ENCODE measurements at regions of chr22 and their contacts with region 1.

Region 1: DNA sequence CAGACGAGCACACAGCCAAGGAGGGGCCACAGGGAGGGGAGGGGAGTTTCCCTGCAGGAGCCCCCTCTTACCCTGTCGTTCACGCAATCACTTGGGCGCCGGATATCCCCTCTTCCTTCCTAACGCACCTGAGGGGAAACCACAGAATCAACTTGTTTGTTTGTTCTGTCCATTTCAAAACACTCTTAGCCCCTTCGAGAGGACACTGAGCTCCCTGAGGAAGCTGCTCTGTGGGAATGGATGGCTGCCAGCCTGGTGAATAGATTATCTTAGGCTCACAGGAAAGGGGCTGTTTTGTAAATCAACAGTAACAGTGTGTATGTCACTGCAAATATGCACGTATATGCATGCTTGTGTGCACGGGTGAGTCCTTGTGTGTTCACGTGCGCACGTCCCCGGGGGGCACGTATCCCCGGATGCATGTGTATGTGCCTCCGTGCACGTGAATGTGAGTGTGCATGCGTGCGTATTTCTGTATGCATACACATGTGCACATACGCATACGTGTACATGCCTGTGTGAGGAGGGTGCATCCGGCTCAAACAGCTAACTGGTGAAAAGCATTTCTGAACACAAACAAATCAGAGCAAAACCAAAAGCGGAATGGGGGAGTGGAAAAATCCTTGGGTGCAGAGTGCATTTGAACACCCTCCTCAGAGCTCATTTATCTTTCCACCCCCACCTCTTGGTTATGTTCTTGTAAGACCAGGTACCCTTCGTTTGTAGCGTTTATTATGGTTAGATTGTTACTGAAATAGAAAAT is 7.2 kb downstream of the ARSA start:
- DNase-seq: peak; percentile 95
- ATAC-seq: peak; percentile 79
- H3K4me3 Mint-ChIP-seq: peak overlapping the region; percentile 84
- H3K27ac Mint-ChIP-seq: peak overlapping the region; percentile 100
- H3K4me1 Mint-ChIP-seq: peaks cover 42% of the 10 kb centered on the region
- H3K27me3 Mint-ChIP-seq: peaks cover 2% of the 10 kb centered on the region

Region 2: GRCh38 chr22:50250555-50251476 is 370.0 kb before region 1 on chr22 and contains the start of gene HDAC10:
- CTCF ChIA-PET with region 1: interaction called, 11 read pairs
- POLR2A ChIA-PET with region 1: interaction called, 4 read pairs
- DNase-seq: peak; percentile 91
- ATAC-seq: peak; percentile 88
- H3K4me3 Mint-ChIP-seq: peak within 1 kb of the TSS; percentile 84
- H3K27ac Mint-ChIP-seq: peak within 1 kb of the TSS; percentile 84
- H3K4me1 Mint-ChIP-seq: peaks cover 26% of the 10 kb centered on the region
- H3K27me3 Mint-ChIP-seq: no peaks in the 10 kb centered on the region
- total RNA-seq, gene HDAC10: 71.4 to 75.9 TPM

Region 3: GRCh38 chr22:50498322-50498890 is 122.4 kb before region 1 on chr22:
- CTCF ChIA-PET with region 1: interaction called, 10 read pairs
- POLR2A ChIA-PET with region 1: interaction called, 6 read pairs
- DNase-seq: peak; percentile 83
- ATAC-seq: peak; percentile 93
- H3K4me3 Mint-ChIP-seq: no peak overlapping the region
- H3K27ac Mint-ChIP-seq: no peak overlapping the region
- H3K4me1 Mint-ChIP-seq: peaks cover 2% of the 10 kb centered on the region
- H3K27me3 Mint-ChIP-seq: peaks cover 3% of the 10 kb centered on the region

Region 4: DNA sequence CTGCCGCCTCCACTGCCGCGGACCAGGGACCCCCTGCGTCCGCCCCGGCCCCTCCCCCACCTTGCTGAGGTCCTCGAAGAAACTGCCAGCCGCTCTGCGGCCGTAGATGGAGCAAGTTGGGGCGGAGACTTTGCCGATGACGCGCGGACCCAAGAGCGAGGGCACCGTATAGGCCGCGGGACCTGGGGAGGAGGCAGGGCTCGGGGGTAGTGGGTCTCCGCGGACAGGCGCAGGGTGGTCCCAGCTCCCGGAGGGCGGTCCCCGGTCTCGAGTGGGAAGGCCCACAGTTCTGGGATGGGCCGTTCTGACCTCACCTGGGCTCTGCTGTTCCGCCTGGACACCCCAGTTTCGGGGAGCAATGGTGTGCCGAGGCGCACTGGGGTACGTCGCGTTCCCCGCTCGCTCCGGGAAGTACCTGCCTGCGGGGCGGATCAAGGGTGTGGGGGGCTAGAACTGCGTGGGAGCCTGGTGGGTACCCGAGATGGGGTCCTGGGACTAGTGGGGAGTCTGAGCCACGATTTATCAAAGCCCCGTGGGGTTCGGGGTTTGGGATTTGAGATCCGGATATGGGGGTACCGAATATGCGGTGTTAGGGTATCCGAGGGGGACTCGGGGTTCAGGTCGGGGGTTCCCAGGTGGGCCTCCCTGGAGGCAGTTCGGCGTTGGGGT is 89.8 kb before region 1 on chr22:
- CTCF ChIA-PET with region 1: interaction called, 77 read pairs
- POLR2A ChIA-PET with region 1: interaction called, 111 read pairs
- DNase-seq: peak; percentile 92
- ATAC-seq: peak; percentile 47
- H3K4me3 Mint-ChIP-seq: peak overlapping the region; percentile 94
- H3K27ac Mint-ChIP-seq: peak overlapping the region; percentile 100
- H3K4me1 Mint-ChIP-seq: peaks cover 51% of the 10 kb centered on the region
- H3K27me3 Mint-ChIP-seq: no peaks in the 10 kb centered on the region

Region 5: GRCh38 chr22:50551160-50551752 is 69.5 kb before region 1 on chr22:
- CTCF ChIA-PET with region 1: interaction called, 27 read pairs
- POLR2A ChIA-PET with region 1: interaction called, 18 read pairs
- DNase-seq: no peak
- ATAC-seq: no peak
- H3K4me3 Mint-ChIP-seq: no peak overlapping the region
- H3K27ac Mint-ChIP-seq: no peak overlapping the region
- H3K4me1 Mint-ChIP-seq: peaks cover 18% of the 10 kb centered on the region
- H3K27me3 Mint-ChIP-seq: peaks cover 7% of the 10 kb centered on the region

Region 6: GRCh38 chr22:50606165-50606945 is 14.4 kb before region 1 on chr22:
- CTCF ChIA-PET with region 1: interaction called, 11 read pairs
- POLR2A ChIA-PET with region 1: interaction called, 4 read pairs
- DNase-seq: no peak
- ATAC-seq: no peak
- H3K4me3 Mint-ChIP-seq: no peak overlapping the region
- H3K27ac Mint-ChIP-seq: no peak overlapping the region
- H3K4me1 Mint-ChIP-seq: peaks cover 8% of the 10 kb centered on the region
- H3K27me3 Mint-ChIP-seq: peaks cover 37% of the 10 kb centered on the region

Measured in activated CD8-positive, alpha-beta T cell treated with anti-CD3 and anti-CD28 coated beads, Interleukin-2, amount 10 ng/mL, durations not matched to agents 7 days and 5 days (primary cell).